ENCODE measurements at regions of chr20 and their contacts with region 1.

Region 1: DNA sequence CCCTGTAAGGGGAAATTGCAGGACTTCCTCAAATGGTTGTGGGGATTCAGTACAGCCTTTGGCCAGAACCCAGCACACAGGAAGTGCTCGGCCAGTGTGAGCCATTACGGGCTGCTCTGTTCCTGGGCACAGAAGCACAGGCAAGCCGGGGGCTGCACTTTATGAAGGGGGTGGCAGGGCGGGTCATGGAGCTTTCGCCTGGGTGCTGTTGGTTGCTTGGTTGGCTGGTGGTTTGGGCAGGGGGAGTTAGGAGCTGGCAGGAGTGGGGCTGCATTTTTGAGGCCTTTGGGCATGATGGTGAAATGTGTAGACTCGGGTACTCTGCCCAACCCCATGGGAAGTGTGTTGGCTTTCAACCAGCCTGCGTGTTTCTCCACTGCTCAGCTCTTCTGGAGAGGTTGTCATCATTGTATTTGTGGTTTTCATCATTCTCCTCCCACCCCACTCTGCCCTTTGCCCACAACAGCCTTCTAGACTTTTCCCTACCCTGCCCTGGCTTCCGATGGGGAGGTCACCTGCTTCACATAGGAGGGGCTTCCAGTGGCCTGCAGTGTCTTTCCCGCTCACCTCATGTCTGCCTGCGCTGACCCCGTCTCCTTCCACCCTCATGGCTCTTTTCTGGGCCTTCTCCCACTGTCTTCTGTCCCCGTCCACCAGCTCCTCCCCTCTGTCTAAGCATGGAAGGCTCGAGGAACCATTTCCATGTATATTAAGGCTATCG is 16.1 kb upstream of the RBM38 start:
- DNase-seq: no peak
- H3K4me3 ChIP-seq: no peak overlapping the region
- CTCF ChIP-seq: no peak

Region 2: GRCh38 chr20:56735191-56735711 is 639.8 kb before region 1 on chr20:
- CTCF ChIA-PET with region 1: no interaction called
- POLR2A ChIA-PET with region 1: no interaction called
- DNase-seq: no peak
- H3K4me3 ChIP-seq: no peak overlapping the region
- CTCF ChIP-seq: no peak

Region 3: DNA sequence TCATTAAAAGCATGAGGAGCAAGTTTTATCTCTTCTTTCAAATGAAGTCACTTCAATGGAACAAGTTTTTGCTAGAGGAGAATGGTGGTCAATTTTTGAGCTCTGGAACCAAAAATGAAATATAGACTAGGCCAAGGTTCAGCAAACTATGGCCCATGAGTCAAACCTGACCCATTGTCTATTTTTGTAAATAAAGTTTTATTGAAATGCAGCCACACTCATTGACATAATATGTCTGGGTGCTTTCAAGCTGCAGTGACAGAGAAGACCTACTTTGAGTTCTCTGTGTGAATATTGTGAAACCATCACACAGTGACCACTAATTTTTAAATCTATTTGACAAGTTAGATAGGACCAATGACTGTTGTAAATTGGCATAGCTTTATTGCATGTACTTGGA is 10.6 kb before region 1 on chr20:
- CTCF ChIA-PET with region 1: interaction called, 14 read pairs
- POLR2A ChIA-PET with region 1: no interaction called
- DNase-seq: no peak
- H3K4me3 ChIP-seq: no peak overlapping the region
- CTCF ChIP-seq: no peak

Region 4: GRCh38 chr20:57493091-57493615 is 118.1 kb after region 1 on chr20:
- CTCF ChIA-PET with region 1: interaction called, 56 read pairs
- POLR2A ChIA-PET with region 1: no interaction called
- DNase-seq: no peak
- H3K4me3 ChIP-seq: no peak overlapping the region
- CTCF ChIP-seq: no peak

Region 5: GRCh38 chr20:57498425-57499400 is 123.6 kb after region 1 on chr20:
- CTCF ChIA-PET with region 1: interaction called, 56 read pairs
- POLR2A ChIA-PET with region 1: no interaction called
- DNase-seq: no peak
- H3K4me3 ChIP-seq: no peak overlapping the region
- CTCF ChIP-seq: peak; percentile 53